ENCODE measurements at regions of chr3 and their contacts with region 1.

Region 1: GRCh38 chr3:50600841-50601591 is 10.6 kb downstream of the CISH start:
- DNase-seq: peak; percentile 98
- H3K4me3 Mint-ChIP-seq: peak overlapping the region; percentile 98
- H3K27ac Mint-ChIP-seq: peak overlapping the region; percentile 100
- H3K4me1 Mint-ChIP-seq: peaks cover 81% of the 10 kb centered on the region
- H3K27me3 Mint-ChIP-seq: no peaks in the 10 kb centered on the region

Region 2: DNA sequence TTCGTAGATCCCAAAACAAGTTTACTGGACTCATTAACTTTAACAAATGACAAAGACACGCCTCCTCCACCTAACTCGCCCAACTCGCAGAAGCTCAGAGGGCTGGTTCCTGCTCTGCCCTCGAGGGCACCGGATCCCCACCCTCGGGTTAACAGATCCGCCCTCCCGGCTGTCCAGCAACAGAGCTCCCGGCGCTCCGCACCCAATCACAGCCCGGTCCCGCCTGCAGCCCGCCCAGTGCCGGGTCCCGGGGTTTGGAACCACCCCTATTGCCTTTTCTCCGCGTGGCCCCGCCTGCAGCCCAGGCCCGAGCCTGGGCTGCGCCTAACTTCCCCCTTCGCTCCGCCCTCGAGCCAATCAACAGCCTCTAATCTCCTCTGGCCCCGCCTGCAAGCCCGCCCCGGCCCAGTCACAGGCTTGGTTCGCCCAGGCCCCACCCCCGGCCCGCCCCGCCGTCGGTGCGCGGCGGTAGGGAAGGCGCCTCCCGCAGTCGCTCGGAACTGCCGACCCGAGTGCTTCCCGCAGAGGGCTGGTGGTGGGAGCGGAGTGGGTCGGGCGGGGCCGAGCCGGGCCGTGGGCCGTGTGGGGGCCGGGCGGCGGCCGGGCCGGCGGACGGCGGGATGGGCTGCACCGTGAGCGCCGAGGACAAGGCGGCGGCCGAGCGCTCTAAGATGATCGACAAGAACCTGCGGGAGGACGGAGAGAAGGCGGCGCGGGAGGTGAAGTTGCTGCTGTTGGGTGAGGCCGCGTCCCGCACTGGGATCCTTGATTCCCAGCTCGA is 365.1 kb before region 1 on chr3 and contains the start of gene GNAI2:
- CTCF ChIA-PET with region 1: no interaction called
- POLR2A ChIA-PET with region 1: no interaction called
- intact Hi-C with region 1: loop called (anchors 5 kb)
- DNase-seq: peak; percentile 100
- H3K4me3 Mint-ChIP-seq: peak within 1 kb of the TSS; percentile 91
- H3K27ac Mint-ChIP-seq: peak within 1 kb of the TSS; percentile 94
- H3K4me1 Mint-ChIP-seq: peaks cover 31% of the 10 kb centered on the region
- H3K27me3 Mint-ChIP-seq: no peaks in the 10 kb centered on the region
- total RNA-seq, gene GNAI2: 346 to 349 TPM

Region 3: DNA sequence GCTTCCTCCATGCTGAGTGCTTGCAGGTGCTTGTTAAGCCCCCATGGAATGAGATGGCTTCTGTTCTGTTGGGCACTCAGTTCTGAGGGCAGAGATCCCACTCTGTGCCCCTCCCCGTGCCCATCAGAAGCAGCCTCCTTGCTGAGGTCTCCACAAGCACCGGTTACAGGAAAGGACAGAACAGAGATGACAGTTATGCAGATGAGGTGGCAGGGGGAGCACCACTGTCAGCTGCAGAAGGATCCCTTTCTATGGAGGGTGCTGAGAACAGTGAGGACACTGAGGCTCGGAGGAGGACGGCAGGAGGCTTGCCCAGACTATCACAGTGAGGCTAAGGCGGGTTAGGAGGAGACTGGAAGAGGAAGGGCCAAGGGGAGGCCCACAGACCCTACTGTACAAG is 110.0 kb before region 1 on chr3:
- CTCF ChIA-PET with region 1: no interaction called
- POLR2A ChIA-PET with region 1: no interaction called
- intact Hi-C with region 1: no loop called
- DNase-seq: peak; percentile 43
- H3K4me3 Mint-ChIP-seq: no peak overlapping the region
- H3K27ac Mint-ChIP-seq: no peak overlapping the region
- H3K4me1 Mint-ChIP-seq: peaks cover 12% of the 10 kb centered on the region
- H3K27me3 Mint-ChIP-seq: no peaks in the 10 kb centered on the region

Region 4: GRCh38 chr3:50550079-50550741 is 50.8 kb before region 1 on chr3:
- CTCF ChIA-PET with region 1: no interaction called
- POLR2A ChIA-PET with region 1: no interaction called
- intact Hi-C with region 1: no loop called
- DNase-seq: peak; percentile 79
- H3K4me3 Mint-ChIP-seq: no peak overlapping the region
- H3K27ac Mint-ChIP-seq: no peak overlapping the region
- H3K4me1 Mint-ChIP-seq: no peaks in the 10 kb centered on the region
- H3K27me3 Mint-ChIP-seq: no peaks in the 10 kb centered on the region

Region 5: GRCh38 chr3:50587806-50588758 is 12.9 kb before region 1 on chr3:
- CTCF ChIA-PET with region 1: interaction called, 221 read pairs
- POLR2A ChIA-PET with region 1: interaction called, 859 read pairs
- intact Hi-C with region 1: loop called (anchors 1 kb)
- DNase-seq: peak; percentile 96
- H3K4me3 Mint-ChIP-seq: peak overlapping the region; percentile 68
- H3K27ac Mint-ChIP-seq: peak overlapping the region; percentile 98
- H3K4me1 Mint-ChIP-seq: peaks cover 94% of the 10 kb centered on the region
- H3K27me3 Mint-ChIP-seq: no peaks in the 10 kb centered on the region

Measured in activated CD4-positive, alpha-beta memory T cell treated with anti-CD3 and anti-CD28 coated beads for 36 hours (primary cell).